ENCODE measurements at regions of chr17 and their contacts with region 1.

Region 1: GRCh38 chr17:47949136-47949759 is 7.9 kb downstream of the PNPO start:
- DNase-seq: no peak
- H3K4me3 ChIP-seq: peak overlapping the region; percentile 43
- CTCF ChIP-seq: peak; percentile 92

Region 2: DNA sequence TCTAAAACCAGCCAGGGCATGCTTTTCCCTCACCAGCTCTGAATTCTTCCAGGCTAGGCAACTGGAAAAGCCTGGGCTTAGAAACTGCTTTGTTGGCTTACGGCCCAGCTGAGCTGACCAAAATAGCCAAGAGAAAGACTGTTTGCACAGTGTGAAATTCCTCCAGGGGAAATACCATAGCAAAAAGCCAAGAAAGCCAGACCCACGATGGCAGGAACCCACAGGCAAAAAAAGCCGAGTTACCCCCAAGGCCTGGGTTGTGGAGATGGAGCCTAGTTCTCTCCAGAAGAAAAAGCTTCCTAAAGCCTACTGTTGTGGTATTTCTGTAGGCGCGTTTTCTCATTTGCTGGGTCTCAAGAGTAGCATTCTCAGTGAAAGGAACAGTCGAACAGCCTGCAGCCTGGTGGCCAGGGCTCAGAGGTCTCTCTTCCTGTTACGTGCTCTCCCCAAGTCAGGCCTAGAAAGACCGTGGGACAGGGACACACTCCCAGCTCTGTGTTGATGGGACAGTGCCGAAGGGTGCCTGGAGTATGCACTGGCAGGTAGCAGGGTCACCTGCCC is 43.9 kb before region 1 on chr17:
- CTCF ChIA-PET with region 1: interaction called, 49 read pairs
- POLR2A ChIA-PET with region 1: no interaction called
- DNase-seq: peak; percentile 54
- H3K4me3 ChIP-seq: no peak overlapping the region
- CTCF ChIP-seq: no peak

Region 3: DNA sequence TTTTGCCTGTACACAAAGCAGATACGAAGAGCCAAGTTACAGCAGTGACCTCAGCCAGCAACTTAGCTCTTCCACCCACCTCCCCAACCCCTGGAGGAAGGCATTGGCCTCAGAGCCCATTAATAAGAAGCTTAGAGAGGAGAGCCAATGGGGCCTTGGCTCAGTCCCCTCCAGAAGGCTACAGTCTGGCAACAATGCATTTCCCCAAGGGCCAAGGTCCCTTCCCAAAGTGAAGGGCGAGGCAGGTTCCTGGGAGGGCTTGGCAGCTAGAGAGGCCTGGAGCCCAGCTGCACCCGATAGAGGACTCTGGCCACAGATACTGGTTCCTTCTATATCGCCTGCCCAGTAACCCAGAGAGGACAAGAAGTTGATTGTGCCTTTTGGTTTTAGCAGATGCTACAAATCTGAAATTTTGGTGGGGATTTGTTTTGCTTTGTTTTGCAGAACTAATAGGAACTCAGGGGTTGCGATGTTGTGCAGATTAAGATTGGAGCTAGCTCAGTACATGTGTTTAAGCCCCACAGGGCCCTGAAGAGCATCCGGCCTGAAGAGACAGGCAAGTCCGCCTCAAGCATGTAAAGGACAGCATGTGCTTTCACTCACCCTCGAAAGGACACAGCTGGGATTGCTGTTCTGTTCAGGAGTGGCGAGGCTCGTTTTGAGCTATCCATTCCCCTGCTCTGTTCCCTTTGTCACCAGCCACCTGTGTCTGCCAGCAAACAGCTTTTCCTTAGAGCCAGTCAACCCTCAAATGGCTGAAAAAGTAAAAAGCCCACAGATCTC is 19.8 kb before region 1 on chr17:
- CTCF ChIA-PET with region 1: interaction called, 40 read pairs
- POLR2A ChIA-PET with region 1: no interaction called
- DNase-seq: no peak
- H3K4me3 ChIP-seq: no peak overlapping the region
- CTCF ChIP-seq: no peak

Region 4: DNA sequence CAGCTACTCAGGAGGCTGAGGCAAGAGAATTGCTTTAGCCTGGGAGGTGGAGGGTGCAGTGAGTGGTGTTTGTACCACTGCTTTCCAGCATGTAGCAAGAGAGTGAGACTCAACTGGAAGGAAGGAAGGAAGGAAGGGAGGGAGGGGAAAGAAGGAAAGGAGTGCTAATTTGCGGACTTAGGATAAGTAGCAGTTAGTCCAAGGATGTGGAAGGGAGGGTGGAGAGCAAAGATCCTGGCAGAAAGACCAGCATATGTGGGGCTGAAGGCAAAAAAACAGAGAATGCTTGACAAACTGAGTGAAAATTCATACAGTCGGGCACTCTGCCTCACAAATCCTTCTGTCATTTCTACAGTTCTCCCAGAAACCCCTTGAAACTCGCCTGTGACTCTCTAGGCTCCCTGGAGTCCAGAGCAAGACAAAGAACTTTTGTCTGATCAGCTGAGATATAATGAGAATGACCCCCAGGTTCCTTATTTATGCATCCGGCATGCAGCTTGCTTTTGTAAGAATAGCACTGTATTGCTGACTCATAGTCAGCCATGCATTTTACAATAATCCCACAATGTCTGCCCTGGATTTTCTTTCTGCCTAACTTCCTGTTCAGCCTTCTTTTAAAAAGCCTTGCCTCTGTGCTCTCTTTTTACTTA is 53.1 kb after region 1 on chr17:
- CTCF ChIA-PET with region 1: interaction called, 14 read pairs
- POLR2A ChIA-PET with region 1: no interaction called
- DNase-seq: no peak
- H3K4me3 ChIP-seq: no peak overlapping the region
- CTCF ChIP-seq: no peak